GM10248 (cell line): ENCODE measurements at regions of chr3 and their contacts with region 1.

Region 1: DNA sequence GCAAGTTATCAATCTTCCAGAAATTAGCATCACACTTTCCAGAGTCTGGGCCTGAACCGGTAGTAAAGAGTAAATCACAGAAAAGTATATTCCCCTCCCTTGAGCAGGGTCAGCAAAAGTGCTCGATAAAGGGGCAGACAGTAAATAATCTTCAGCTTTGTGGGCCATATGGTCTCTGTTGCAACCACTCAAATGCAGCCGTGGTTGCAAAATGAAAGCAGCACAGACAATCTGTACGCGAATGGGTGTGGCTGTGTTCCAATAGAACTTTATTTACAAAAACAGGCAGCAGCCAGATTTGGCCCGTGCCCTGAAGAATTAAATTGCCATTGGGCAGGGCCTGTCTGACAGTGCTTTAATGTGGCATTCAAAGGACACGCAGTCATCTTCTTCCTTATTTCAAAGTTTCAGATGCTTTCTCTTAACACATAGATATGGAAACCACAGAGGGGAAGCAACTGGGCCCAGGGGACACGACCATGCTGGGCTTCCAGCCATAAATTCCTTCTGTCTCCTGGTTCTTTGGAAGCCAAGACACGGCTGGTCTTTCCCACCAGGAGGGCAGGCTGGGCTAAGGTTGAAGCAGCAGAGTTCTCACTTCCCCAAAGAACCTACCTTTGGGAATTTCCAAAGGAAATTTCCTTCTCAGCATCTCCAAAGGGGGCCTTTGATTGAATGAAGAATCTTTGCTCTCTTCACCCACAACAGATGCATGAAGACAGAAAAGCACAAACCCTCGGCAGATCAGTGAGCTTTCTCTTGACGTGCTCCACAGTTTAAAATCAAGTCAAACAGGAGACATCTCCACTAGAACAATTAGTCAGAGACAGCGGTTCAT is 489.8 kb upstream of the PROK2 start:
- DNase-seq: no peak
- CTCF ChIP-seq: no peak

Region 2: DNA sequence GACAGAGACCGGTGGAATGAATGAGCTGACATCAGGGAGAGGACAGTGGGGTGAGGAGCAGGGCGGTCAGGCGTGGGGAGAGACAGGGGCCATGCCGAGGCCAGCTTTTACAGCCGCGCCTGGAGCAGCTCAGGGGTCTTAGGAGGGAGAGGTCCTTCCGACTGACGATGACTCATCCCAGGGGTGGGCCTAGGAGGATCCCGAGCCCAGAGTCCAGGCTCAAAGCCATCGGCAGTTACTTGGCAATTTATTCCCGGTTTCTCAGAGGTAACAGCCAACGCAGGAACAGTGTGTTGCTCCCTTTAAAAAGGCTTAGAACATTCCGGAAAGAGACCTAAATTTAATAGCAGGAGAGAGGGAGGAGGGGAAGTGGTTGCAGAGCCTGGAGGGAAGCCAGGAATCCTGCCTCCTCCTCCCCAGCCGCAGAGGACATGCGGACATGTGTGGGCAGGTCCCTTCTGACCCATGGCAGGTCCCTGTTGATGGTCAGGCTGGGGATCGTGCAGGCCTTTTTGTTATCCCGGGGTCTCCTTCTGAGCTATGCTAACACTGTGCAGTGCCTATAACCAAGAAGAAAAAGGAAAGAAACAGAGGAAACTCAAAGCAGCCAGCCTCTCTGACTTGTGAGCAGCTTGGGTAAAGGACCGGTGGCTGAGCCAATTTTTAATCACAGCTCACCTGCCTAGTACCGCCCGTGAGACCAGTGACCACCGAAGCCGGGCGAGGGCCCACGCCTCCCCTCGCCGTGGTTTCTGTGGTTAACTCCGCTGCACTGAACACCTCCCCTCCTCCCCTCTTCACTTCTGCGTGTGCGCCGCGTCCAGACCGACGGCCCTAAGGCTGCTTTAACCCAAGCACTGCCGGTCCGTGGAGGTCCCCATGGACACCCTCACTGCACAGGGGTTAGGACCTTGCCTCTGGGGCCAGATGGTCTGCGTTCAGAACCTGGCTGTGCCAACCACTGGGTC is 97.3 kb before region 1 on chr3:
- CTCF ChIA-PET with region 1: no interaction called
- POLR2A ChIA-PET with region 1: no interaction called
- DNase-seq: peak; percentile 69
- CTCF ChIP-seq: no peak

Region 3: DNA sequence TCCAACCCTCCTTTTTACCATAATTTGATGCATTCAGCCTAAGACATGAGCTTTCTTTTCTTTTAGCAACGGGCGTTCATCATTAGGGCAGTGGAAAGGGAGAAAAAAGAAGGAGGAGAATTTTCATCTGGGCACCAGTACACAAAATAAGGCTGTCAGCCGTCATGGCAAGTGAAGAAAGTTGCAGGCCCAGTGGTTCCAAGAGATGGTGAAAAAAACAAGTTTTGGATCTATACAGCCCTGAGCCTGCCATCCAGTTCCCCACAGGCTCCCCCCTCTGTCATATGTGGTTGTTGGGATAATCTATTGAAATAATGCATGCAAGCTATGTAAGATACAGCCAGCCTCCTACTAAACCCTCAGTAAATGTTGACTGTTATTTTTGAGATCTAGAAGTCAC is 10.8 kb after region 1 on chr3:
- CTCF ChIA-PET with region 1: interaction called, 10 read pairs
- POLR2A ChIA-PET with region 1: no interaction called
- DNase-seq: no peak
- CTCF ChIP-seq: no peak